ENCODE measurements at regions of chr9 and their contacts with region 1.

Region 1: GRCh38 chr9:92963831-92964626 is 16.7 kb downstream of the FGD3 start:
- DNase-seq: peak; percentile 54 to 94 (median 93)
- ATAC-seq: peak; percentile 84
- H3K4me3 ChIP-seq: peak overlapping the region; percentile 85
- H3K4me3 Mint-ChIP-seq: peak overlapping the region; percentile 86 to 98 (median 93)
- H3K27ac ChIP-seq: peak overlapping the region; percentile 85
- H3K27ac Mint-ChIP-seq: peak overlapping the region; percentile 96 to 99 (median 98)
- H3K4me1 ChIP-seq: peaks cover 60 to 67% of the 10 kb centered on the region in 2 donors
- H3K4me1 Mint-ChIP-seq: peaks cover 40 to 63% (median 56%) of the 10 kb centered on the region in 7 donors
- H3K27me3 ChIP-seq: no peaks in the 10 kb centered on the region
- H3K27me3 Mint-ChIP-seq: no peaks in the 10 kb centered on the region

Region 2: DNA sequence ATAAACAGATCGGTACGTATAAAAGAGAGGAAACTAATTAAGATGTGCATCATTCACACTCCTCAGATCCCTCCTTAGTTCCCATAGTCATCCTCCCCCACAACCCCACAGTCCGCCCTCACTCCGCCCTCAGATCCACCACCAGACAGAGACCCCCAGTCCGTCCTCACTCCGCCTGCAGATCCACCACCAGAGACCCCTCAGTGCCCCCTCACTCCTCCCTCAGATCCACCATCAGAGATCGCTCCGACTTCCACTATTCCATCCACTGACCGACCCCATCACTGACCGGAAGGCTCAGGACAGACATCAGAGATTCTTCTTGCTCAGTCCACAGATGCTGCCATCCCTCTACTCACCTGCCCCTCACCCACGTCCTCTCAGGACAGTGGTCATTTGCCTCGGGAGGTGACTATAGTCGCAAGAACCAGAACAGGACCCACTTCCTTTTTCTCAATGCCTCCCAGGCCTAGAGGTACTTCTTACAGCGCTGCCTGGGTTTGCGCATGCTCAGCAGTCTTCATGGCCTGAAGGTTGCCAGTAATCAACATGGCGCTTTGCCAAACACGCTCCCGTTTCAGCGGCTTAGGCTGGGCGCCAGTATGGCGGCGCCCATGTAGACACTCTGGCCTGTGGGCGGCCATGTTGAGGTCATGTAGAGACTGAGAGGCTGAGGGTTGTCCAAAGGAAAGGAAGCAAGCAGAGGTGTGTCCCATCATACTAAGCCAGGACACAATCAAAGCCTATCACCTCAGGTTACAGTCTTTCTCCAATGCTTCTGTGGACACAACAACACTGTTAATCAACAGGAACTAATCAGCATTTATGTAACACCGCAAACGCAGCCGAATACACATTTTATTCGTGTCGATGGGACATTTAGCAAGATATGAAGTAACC is 86.2 kb before region 1 on chr9 and contains the start of gene ZNF484:
- CTCF ChIA-PET with region 1: no interaction called
- POLR2A ChIA-PET with region 1: interaction called, 5 read pairs
- intact Hi-C with region 1: loop called (anchors 1 to 5 kb)
- DNase-seq: peak; percentile 86 to 97 (median 94)
- ATAC-seq: peak; percentile 99
- H3K4me3 ChIP-seq: peak within 1 kb of the TSS; percentile 77
- H3K4me3 Mint-ChIP-seq: peak within 1 kb of the TSS; percentile 91 to 100 (median 99)
- H3K27ac ChIP-seq: peak within 1 kb of the TSS; percentile 90
- H3K27ac Mint-ChIP-seq: peak within 1 kb of the TSS; percentile 94 to 100 (median 99)
- H3K4me1 ChIP-seq: peaks cover 0 to 15% of the 10 kb centered on the region in 2 donors
- H3K4me1 Mint-ChIP-seq: peaks cover 28 to 69% (median 58%) of the 10 kb centered on the region in 7 donors
- H3K27me3 ChIP-seq: no peaks in the 10 kb centered on the region
- H3K27me3 Mint-ChIP-seq: no peaks in the 10 kb centered on the region
- total RNA-seq, gene ZNF484: 12.4 to 25.4 (median 14.0) TPM

Region 3: DNA sequence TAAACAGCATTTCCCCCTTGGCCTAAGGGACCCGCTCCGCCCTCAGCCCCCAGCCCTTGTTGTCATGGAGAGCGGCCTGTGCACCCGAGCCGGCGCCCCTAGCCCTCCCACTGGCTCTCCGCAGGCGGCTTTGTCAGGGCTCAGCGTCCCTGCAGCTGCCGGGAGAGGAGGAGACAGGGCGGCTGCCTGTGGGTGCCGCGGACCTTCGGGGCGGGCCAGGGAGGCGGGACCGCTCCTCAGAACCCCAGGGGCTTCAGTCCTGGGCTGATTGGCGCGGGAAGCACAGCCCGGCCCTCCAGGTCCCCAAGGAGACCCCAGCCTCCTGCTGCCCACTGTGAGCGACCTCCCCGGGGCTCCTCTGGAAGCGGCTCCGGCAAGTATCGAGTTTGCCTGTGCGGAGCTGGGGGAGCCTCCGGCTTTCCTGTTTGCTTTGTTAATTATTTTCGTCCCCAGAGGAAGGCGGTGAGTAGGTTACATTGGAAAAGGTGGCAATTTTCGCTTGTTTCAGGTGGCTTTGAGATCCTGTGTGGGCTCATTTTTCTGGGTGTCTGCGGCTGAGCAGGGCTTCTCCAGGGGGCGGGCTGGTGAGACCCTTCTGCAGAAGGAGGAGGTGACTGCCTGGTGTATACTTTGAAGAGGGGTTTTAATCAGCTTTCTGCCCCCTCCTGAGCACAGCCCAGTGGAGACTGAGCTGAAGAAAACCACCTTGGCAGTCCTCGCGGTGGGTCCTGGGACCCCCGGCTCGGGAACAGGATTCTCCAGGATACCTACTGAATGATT is 16.6 kb before region 1 on chr9 and contains the start of gene FGD3:
- CTCF ChIA-PET with region 1: interaction called, 18 read pairs
- POLR2A ChIA-PET with region 1: interaction called, 214 read pairs
- intact Hi-C with region 1: no loop called
- DNase-seq: peak in 7 of 9 donors; percentile 38 to 54 (median 45)
- ATAC-seq: peak; percentile 80
- H3K4me3 ChIP-seq: peak within 1 kb of the TSS; percentile 91
- H3K4me3 Mint-ChIP-seq: peak within 1 kb of the TSS; percentile 41 to 99 (median 98)
- H3K27ac ChIP-seq: peak within 1 kb of the TSS; percentile 84
- H3K27ac Mint-ChIP-seq: peak within 1 kb of the TSS; percentile 50 to 98 (median 96)
- H3K4me1 ChIP-seq: peaks cover 34 to 49% of the 10 kb centered on the region in 2 donors
- H3K4me1 Mint-ChIP-seq: peaks cover 29 to 75% (median 64%) of the 10 kb centered on the region in 7 donors
- H3K27me3 ChIP-seq: no peaks in the 10 kb centered on the region
- H3K27me3 Mint-ChIP-seq: peaks cover 0 to 13% (median 0%) of the 10 kb centered on the region in 5 donors
- total RNA-seq, gene FGD3: 141 to 341 (median 193) TPM

Region 4: GRCh38 chr9:92986176-92987085 is 22.4 kb after region 1 on chr9:
- CTCF ChIA-PET with region 1: no interaction called
- POLR2A ChIA-PET with region 1: interaction called, 45 read pairs
- intact Hi-C with region 1: loop called in 1 of 2 experiments (anchors 1 kb)
- DNase-seq: peak in 7 of 9 donors; percentile 52 to 66 (median 57)
- ATAC-seq: peak; percentile 75
- H3K4me3 ChIP-seq: no peak overlapping the region
- H3K4me3 Mint-ChIP-seq: peak overlapping the region; percentile 34 to 71 (median 62)
- H3K27ac ChIP-seq: peak overlapping the region; percentile 59
- H3K27ac Mint-ChIP-seq: peak overlapping the region; percentile 56 to 95 (median 86)
- H3K4me1 ChIP-seq: peaks cover 65 to 71% of the 10 kb centered on the region in 2 donors
- H3K4me1 Mint-ChIP-seq: peaks cover 66 to 93% (median 89%) of the 10 kb centered on the region in 7 donors
- H3K27me3 ChIP-seq: no peaks in the 10 kb centered on the region
- H3K27me3 Mint-ChIP-seq: no peaks in the 10 kb centered on the region

Region 5: DNA sequence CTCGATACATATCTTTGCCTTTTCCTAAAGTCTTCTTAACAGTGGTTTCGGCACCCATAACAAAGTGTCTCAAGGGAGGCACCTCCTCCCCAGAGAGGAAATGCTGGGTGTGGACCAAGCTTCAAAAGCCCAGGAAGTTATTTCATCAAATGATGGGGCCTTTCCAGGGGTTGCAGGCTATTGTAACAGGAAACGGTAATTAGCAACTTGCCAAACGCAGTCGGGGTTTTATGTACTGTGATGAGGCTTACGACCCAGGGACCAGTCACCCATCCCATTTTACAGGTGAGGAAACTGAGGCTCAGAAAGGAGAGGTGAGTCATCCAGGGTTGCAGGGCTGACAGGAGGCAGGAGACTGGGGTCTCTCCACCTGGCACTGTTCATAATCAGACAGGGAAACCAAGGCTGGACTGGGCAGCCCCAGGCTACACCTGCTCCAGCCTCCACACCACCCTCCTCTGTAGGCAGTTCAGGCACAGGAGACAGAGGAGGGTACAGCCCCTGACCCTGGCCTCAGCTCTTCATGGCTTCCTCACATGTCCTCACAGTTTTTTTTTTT is 64.5 kb after region 1 on chr9:
- CTCF ChIA-PET with region 1: interaction called, 3 read pairs
- POLR2A ChIA-PET with region 1: interaction called, 233 read pairs
- intact Hi-C with region 1: loop called (anchors 2 kb)
- DNase-seq: peak; percentile 38 to 94 (median 91)
- ATAC-seq: peak; percentile 93
- H3K4me3 ChIP-seq: peak overlapping the region; percentile 49
- H3K4me3 Mint-ChIP-seq: peak overlapping the region; percentile 80 to 91 (median 88)
- H3K27ac ChIP-seq: peak overlapping the region; percentile 90
- H3K27ac Mint-ChIP-seq: peak overlapping the region; percentile 96 to 100 (median 99)
- H3K4me1 ChIP-seq: peaks cover 62 to 93% of the 10 kb centered on the region in 2 donors
- H3K4me1 Mint-ChIP-seq: peaks cover 54 to 93% (median 82%) of the 10 kb centered on the region in 7 donors
- H3K27me3 ChIP-seq: no peaks in the 10 kb centered on the region
- H3K27me3 Mint-ChIP-seq: no peaks in the 10 kb centered on the region

Region 6: DNA sequence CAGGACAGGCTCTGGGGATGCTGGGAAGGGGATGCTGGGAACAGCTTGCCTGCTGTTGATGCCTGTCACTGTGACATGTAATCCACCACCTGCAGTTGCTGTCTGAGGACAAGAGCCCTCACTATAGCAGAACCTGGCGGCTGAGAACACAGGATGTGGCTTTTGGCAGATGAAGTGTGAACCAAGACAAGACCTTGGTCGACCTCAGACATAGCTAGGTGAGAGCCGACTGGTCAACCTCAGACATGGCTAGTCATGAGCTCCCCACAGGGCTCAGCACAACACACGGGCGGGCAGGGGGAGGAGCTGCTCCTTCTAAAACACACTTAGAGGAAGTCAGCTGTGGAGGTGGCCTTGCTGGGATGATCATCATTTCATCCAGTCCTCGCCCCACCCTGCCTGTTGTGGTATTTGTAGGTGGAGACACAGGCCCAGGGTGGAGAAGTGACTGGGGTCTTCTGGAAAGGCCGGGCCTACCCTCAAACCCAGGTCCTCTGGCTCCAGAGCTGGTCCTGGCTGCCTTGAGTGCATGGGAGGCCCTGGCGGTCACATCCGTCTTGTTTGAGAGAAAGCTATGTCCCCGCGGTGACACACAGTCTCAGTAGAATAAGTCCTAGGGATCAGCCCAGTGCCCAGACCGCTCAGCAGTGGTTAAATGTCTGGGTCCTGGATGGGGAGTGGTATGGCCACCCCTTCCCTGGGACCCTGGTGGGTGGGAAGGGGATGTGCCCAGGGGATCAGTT is 100.5 kb after region 1 on chr9:
- CTCF ChIA-PET with region 1: interaction called, 4 read pairs
- POLR2A ChIA-PET with region 1: interaction called, 105 read pairs
- intact Hi-C with region 1: loop called (anchors 1 kb)
- DNase-seq: peak; percentile 54 to 95 (median 90)
- ATAC-seq: peak; percentile 96
- H3K4me3 ChIP-seq: peak overlapping the region; percentile 90
- H3K4me3 Mint-ChIP-seq: peak overlapping the region; percentile 87 to 97 (median 92)
- H3K27ac ChIP-seq: peak overlapping the region; percentile 88
- H3K27ac Mint-ChIP-seq: peak overlapping the region; percentile 97 to 100 (median 99)
- H3K4me1 ChIP-seq: peaks cover 63 to 87% of the 10 kb centered on the region in 2 donors
- H3K4me1 Mint-ChIP-seq: peaks cover 71 to 95% (median 86%) of the 10 kb centered on the region in 7 donors
- H3K27me3 ChIP-seq: no peaks in the 10 kb centered on the region
- H3K27me3 Mint-ChIP-seq: no peaks in the 10 kb centered on the region

Region 7: GRCh38 chr9:93173365-93174051 is 209.5 kb after region 1 on chr9:
- CTCF ChIA-PET with region 1: no interaction called
- POLR2A ChIA-PET with region 1: no interaction called
- intact Hi-C with region 1: no loop called
- DNase-seq: peak in 3 of 9 donors; percentile 11 to 22 (median 13)
- ATAC-seq: no peak
- H3K4me3 ChIP-seq: no peak overlapping the region
- H3K4me3 Mint-ChIP-seq: peak overlapping the region in 3 of 10 donors; percentile 10 to 32 (median 18)
- H3K27ac ChIP-seq: no peak overlapping the region
- H3K27ac Mint-ChIP-seq: peak overlapping the region in 5 of 9 donors; percentile 12 to 81 (median 24)
- H3K4me1 ChIP-seq: no peaks in the 10 kb centered on the region
- H3K4me1 Mint-ChIP-seq: peaks cover 0 to 5% (median 1%) of the 10 kb centered on the region in 7 donors
- H3K27me3 ChIP-seq: no peaks in the 10 kb centered on the region
- H3K27me3 Mint-ChIP-seq: peaks cover 0 to 10% (median under 1%) of the 10 kb centered on the region in 5 donors